Stomach (tissue), 19 donors: ENCODE measurements at regions of chr20 and their contacts with region 1.

Region 1: DNA sequence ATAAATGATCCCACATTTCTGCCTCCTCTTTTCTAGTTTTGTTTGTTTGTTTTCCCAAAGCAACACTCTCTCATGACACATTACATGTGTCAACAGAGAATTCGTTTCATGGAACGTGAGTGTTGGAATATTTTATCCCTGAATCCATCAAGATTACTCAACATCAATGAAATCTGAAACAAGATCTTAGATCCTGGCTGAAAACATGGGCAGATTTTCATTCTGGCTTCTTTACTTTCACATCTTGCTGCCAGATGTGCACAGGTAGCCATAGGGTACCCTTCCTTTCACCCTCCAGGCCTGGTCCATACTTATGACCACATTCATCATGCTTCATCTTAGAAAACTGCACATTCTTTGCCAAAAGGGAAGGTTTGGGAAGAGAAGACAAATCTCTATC is 347.0 kb downstream of the DOK5 start:
- DNase-seq: no peak
- H3K4me3 ChIP-seq: no peak overlapping the region
- H3K27ac ChIP-seq: no peak overlapping the region
- H3K4me1 ChIP-seq: no peaks in the 10 kb centered on the region
- H3K27me3 ChIP-seq: no peaks in the 10 kb centered on the region
- CTCF ChIP-seq: no peak
- EP300 ChIP-seq: no peak
- POLR2A ChIP-seq: no peak

Region 2: GRCh38 chr20:54449158-54449557 is 373.2 kb before region 1 on chr20:
- intact Hi-C with region 1: loop called (anchors 10 kb)
- DNase-seq: no peak
- H3K4me3 ChIP-seq: no peak overlapping the region
- H3K27ac ChIP-seq: no peak overlapping the region
- H3K4me1 ChIP-seq: no peaks in the 10 kb centered on the region
- H3K27me3 ChIP-seq: no peaks in the 10 kb centered on the region
- CTCF ChIP-seq: no peak
- EP300 ChIP-seq: no peak
- POLR2A ChIP-seq: no peak